HepG2 (cell line): ENCODE measurements at regions of chr3 and their contacts with region 1.

Region 1: DNA sequence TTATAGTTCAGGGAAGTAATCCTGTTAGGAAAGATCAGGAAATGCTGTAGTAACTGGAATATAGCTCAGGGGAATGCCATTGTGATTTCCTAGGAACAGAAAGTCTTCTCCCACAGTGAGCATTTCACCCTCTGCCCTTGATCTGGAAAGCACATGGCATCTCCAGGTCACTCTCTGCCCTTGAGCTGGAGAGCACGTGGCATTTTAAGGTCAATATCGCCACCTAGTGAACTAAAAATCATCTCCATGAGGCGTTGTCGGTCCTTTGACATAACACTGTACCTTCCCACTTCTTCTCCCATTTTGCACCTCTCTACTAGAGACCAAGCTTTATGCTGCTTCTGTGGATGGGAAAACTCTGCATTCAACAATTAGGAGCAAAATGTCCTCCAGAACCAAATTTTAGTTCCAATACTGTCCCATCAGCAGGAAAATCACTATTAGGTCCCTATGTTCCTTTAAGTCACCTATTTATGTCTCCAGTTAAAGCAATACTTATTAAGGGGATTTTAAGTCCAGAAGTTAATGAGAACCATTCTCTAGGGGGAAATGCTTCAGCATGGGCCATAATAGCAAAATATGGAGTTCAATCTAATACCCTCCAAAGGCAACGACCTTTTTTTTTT is 54.7 kb upstream of the GK5 start:
- DNase-seq: peak; percentile 75
- ATAC-seq: peak; percentile 99
- H3K4me3 ChIP-seq: no peak overlapping the region
- H3K27ac ChIP-seq: no peak overlapping the region
- H3K4me1 ChIP-seq: peaks cover 6% of the 10 kb centered on the region; the same call in 1 of the 2 replicates
- H3K27me3 ChIP-seq: no peaks in the 10 kb centered on the region
- CTCF ChIP-seq: peak; percentile 94
- EP300 ChIP-seq: no peak
- POLR2A ChIP-seq: no peak
- RAD21 ChIP-seq: peak; percentile 87

Region 2: DNA sequence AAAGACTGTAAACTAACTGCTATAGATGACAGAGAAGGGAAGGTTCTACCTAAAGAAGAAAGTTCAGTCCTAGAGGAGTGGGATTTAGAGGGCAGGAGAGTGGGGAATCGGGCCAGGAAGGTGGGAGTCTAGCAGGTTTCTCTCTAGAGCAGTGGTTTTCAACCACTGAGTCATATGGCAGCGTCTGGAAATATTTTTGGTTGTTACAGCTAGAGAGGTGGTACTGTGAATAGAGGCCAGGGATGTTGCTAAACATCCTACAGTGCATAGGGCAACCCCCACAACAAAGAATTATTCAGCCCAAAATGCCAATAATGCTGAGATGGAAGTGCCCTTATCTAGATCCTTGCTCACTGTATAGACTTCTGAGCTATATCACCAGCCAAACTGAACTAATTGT is 374.9 kb before region 1 on chr3:
- CTCF ChIA-PET with region 1: no interaction called
- POLR2A ChIA-PET with region 1: no interaction called
- in situ Hi-C with region 1: no loop called
- intact Hi-C with region 1: no loop called
- DNase-seq: no peak
- ATAC-seq: no peak
- H3K4me3 ChIP-seq: no peak overlapping the region
- H3K27ac ChIP-seq: no peak overlapping the region
- H3K4me1 ChIP-seq: no peaks in the 10 kb centered on the region
- H3K27me3 ChIP-seq: no peaks in the 10 kb centered on the region
- CTCF ChIP-seq: no peak
- EP300 ChIP-seq: no peak
- POLR2A ChIP-seq: no peak
- RAD21 ChIP-seq: no peak

Region 3: DNA sequence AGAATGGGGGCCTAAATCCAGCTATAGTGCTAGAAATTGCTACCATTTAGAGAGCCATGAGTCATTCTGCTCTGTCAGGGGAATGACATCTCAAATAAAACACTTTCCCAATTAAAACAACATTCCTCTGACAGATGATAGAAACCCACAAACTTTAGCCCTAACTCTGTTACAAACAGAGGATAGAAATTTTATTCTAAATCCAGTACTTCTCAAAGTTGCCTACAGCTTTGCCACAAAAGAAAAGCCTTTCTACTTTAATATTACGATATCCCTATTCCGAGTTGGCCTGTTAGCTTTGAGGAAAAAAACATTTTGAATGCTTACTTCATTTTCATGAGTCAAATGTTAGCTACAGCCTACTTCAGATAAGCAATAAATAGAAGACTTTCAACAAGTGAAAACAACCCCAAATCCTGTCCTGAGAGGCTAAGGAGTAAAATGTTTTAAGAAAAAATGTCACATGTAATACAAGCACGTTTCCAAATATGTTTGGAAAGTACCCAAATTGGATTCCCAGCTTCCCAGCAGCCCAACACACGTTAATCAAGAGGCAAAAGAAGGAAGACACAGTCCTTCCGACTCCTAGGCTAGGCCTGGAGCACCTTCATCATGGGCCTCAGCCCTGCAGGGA is 320.0 kb before region 1 on chr3:
- CTCF ChIA-PET with region 1: interaction called, 5 read pairs
- POLR2A ChIA-PET with region 1: no interaction called
- in situ Hi-C with region 1: loop called (anchors 10 kb)
- intact Hi-C with region 1: loop called (anchors 1 kb)
- DNase-seq: no peak
- ATAC-seq: no peak
- H3K4me3 ChIP-seq: no peak overlapping the region
- H3K27ac ChIP-seq: no peak overlapping the region
- H3K4me1 ChIP-seq: no peaks in the 10 kb centered on the region
- H3K27me3 ChIP-seq: no peaks in the 10 kb centered on the region
- CTCF ChIP-seq: no peak
- EP300 ChIP-seq: no peak
- POLR2A ChIP-seq: no peak
- RAD21 ChIP-seq: no peak

Region 4: GRCh38 chr3:142180761-142181362 is 99.2 kb before region 1 on chr3:
- CTCF ChIA-PET with region 1: interaction called, 15 read pairs
- POLR2A ChIA-PET with region 1: interaction called, 4 read pairs
- in situ Hi-C with region 1: loop called (anchors 10 kb)
- intact Hi-C with region 1: loop called (anchors 1 kb)
- DNase-seq: peak; percentile 28
- ATAC-seq: peak; percentile 82
- H3K4me3 ChIP-seq: no peak overlapping the region
- H3K27ac ChIP-seq: no peak overlapping the region
- H3K4me1 ChIP-seq: no peaks in the 10 kb centered on the region
- H3K27me3 ChIP-seq: no peaks in the 10 kb centered on the region
- CTCF ChIP-seq: peak; percentile 55
- EP300 ChIP-seq: no peak
- POLR2A ChIP-seq: no peak
- RAD21 ChIP-seq: peak; percentile 40; the same call in 1 of the 2 replicates